Thyroid gland (tissue), 4 donors: ENCODE measurements at regions of chr10 and their contacts with region 1.

Region 1: DNA sequence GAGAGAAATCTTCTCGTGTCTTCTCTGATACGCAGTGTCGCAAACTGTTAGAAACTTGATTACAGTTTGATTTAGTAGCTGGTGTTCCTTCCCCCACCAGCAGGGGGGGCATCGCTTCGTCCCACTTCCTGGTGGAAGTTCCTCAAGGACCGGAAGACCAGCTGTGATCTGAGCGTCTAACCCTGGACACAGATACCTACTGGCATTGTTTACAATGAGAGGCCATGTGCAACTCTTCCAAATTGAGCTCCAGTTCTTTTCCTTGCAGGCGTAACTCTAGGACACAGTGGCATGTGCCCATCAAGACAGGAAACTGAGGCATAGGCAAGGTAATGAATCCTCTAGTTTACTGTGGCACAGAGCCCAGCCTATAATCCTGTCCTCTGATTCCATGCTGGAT is 219.0 kb downstream of the CCDC3 start:
- DNase-seq: peak; percentile 18 to 19
- H3K4me3 ChIP-seq: no peak overlapping the region
- H3K27ac ChIP-seq: no peak overlapping the region
- H3K4me1 ChIP-seq: no peaks in the 10 kb centered on the region
- H3K27me3 ChIP-seq: no peaks in the 10 kb centered on the region
- CTCF ChIP-seq: peak; percentile 36 to 60 (median 46)
- POLR2A ChIP-seq: no peak

Region 2: DNA sequence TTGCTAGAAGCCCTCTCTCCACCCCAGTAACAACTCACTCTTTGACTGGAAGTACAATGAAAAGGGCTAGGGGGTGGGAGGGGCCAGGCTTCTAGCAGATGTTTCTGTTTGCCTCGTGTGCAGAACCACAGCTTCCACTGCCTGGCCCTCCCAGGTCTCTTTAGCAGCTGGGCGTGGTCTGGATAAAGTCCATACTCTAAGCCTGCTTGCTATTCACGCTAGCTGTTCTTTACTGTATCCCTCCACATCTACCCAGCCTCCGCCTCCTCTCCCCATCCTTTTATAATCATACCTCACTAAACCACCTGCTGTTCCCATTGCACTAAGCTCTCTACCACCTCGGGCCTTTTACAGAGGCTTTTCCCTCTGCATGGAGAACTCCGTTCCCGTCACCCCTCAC is 144.4 kb before region 1 on chr10:
- intact Hi-C with region 1: no loop called
- DNase-seq: no peak
- H3K4me3 ChIP-seq: no peak overlapping the region
- H3K27ac ChIP-seq: no peak overlapping the region
- H3K4me1 ChIP-seq: peaks cover 57 to 77% of the 10 kb centered on the region in 2 donors
- H3K27me3 ChIP-seq: no peaks in the 10 kb centered on the region
- CTCF ChIP-seq: no peak
- POLR2A ChIP-seq: no peak

Region 3: DNA sequence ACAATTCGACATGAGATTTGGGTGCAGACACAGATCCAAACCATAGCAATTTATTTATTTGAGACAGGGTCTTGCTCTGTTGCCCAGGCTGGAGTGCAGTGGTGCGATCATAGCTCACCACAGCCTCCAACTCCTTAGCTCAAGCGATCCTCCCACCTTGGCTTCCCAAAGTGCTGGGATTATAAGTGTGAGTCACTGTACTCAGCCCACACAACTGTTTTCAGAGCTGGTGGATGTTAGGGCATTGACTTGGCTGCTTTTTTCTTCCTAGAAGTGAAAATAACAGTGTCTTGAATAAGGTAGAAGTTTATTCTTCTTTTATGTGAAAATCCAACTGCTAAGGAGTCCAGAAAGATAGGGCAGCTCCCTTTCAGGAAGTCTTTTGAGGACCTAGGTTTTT is 86.9 kb after region 1 on chr10:
- intact Hi-C with region 1: no loop called
- DNase-seq: no peak
- H3K4me3 ChIP-seq: no peak overlapping the region
- H3K27ac ChIP-seq: no peak overlapping the region
- H3K4me1 ChIP-seq: no peaks in the 10 kb centered on the region
- H3K27me3 ChIP-seq: no peaks in the 10 kb centered on the region
- CTCF ChIP-seq: no peak
- POLR2A ChIP-seq: no peak

Region 4: GRCh38 chr10:12902135-12902572 is 119.6 kb after region 1 on chr10:
- intact Hi-C with region 1: loop called (anchors 5 kb)
- DNase-seq: peak; percentile 66 to 69
- H3K4me3 ChIP-seq: no peak overlapping the region
- H3K27ac ChIP-seq: no peak overlapping the region
- H3K4me1 ChIP-seq: no peaks in the 10 kb centered on the region
- H3K27me3 ChIP-seq: no peaks in the 10 kb centered on the region
- CTCF ChIP-seq: peak; percentile 59 to 81 (median 67)
- POLR2A ChIP-seq: no peak

Region 5: DNA sequence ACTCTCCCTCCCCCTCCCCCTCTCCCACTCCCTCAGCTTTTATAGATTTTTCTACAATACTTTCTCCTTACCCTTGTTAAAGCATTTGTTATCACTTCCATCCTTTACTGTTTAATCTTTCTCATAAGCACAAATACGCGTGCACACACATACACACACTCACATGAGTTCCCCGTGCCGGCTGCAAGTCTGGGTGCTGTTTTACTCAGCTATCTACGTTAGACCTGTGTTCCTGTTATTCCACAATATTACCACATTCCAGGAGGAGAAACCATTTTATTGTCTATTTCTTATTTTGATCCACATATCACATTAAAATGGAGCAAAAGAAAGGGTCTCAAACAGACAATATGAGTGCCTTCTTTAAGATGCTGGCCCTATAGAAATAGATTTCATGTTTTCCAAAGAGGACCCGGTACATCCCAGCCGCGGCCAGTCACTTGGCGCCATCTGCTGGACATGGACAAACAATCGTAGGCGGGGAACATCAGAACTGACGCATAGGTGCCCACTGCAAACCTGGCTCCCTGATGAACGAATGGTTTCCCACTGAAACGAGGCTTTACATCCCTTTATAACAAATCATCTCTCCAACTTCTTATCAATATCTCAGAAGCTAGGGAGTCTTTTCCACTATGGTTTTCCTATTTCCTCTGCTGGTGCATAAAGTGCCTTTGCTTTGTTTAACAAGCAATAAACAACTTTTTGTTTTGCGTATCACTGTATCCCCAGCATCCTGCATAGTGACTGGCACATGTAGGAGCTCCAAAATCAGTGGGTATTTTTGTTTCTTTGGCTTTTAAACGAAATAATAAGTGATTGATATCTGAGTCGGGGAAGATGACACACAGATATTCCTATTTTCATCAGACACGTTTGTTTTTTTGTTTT is 292.3 kb after region 1 on chr10:
- intact Hi-C with region 1: loop called (anchors 10 kb)
- DNase-seq: peak; percentile 63 to 77
- H3K4me3 ChIP-seq: no peak overlapping the region
- H3K27ac ChIP-seq: no peak overlapping the region
- H3K4me1 ChIP-seq: no peaks in the 10 kb centered on the region
- H3K27me3 ChIP-seq: no peaks in the 10 kb centered on the region
- CTCF ChIP-seq: peak; percentile 50 to 87 (median 66)
- POLR2A ChIP-seq: no peak